ENCODE measurements at regions of chrX and their contacts with region 1.

Region 1: DNA sequence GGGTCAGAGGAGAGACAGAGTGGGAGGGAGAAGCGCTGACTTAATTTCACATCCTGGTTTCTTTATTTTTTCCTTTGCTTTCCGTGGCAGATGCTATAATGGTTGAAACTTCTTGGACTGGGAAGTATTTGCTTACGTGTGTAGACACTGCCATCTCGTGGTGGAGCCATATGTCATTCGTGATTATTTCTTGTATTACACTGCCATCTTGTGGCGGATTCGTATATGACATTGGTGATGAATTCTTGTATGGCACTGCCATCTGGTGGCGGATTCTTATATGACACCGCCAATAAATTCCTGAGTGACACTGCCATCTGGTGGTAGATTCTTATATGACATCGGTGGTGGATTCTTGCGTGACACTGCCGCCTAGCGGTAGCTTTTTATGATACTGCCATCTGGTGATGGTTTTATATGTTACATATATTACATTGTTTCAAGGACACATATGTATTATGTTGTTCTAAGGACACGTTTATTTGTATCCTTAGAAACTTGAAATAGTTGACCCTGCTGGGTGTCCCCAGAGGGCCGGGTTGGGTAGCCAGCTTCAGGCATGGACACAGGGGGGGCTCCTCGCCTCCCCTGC is 37.3 kb upstream of the CLCN4 start:
- DNase-seq: peak; percentile 26 to 87 (median 66)
- ATAC-seq: peak; percentile 72 to 85 (median 79)
- H3K4me3 ChIP-seq: no peak overlapping the region
- H3K4me3 Mint-ChIP-seq: no peak overlapping the region
- H3K27ac ChIP-seq: peak overlapping the region; percentile 49
- H3K27ac Mint-ChIP-seq: peak overlapping the region; percentile 26 to 85
- H3K4me1 ChIP-seq: peaks cover 0 to 17% of the 10 kb centered on the region in 2 experiments
- H3K4me1 Mint-ChIP-seq: peaks cover 13 to 42% (median 20%) of the 10 kb centered on the region in 3 donors
- H3K27me3 ChIP-seq: no peaks in the 10 kb centered on the region
- H3K27me3 Mint-ChIP-seq: no peaks in the 10 kb centered on the region

Region 2: GRCh38 chrX:9882669-9883446 is 236.6 kb before region 1 on chrX:
- CTCF ChIA-PET with region 1: no interaction called
- POLR2A ChIA-PET with region 1: no interaction called
- DNase-seq: no peak
- ATAC-seq: no peak
- H3K4me3 ChIP-seq: no peak overlapping the region
- H3K4me3 Mint-ChIP-seq: no peak overlapping the region
- H3K27ac ChIP-seq: no peak overlapping the region
- H3K27ac Mint-ChIP-seq: no peak overlapping the region
- H3K4me1 ChIP-seq: peaks cover 0 to 3% of the 10 kb centered on the region in 2 experiments
- H3K4me1 Mint-ChIP-seq: peaks cover 2 to 16% (median 2%) of the 10 kb centered on the region in 3 donors
- H3K27me3 ChIP-seq: peaks cover 0 to 5% of the 10 kb centered on the region in 2 experiments
- H3K27me3 Mint-ChIP-seq: peaks cover 2 to 17% of the 10 kb centered on the region in 2 donors

Region 3: GRCh38 chrX:9913146-9913433 is 206.4 kb before region 1 on chrX:
- CTCF ChIA-PET with region 1: no interaction called
- POLR2A ChIA-PET with region 1: no interaction called
- DNase-seq: no peak
- ATAC-seq: no peak
- H3K4me3 ChIP-seq: no peak overlapping the region
- H3K4me3 Mint-ChIP-seq: no peak overlapping the region
- H3K27ac ChIP-seq: no peak overlapping the region
- H3K27ac Mint-ChIP-seq: no peak overlapping the region
- H3K4me1 ChIP-seq: no peaks in the 10 kb centered on the region
- H3K4me1 Mint-ChIP-seq: no peaks in the 10 kb centered on the region
- H3K27me3 ChIP-seq: peaks cover 0 to 3% of the 10 kb centered on the region in 2 experiments
- H3K27me3 Mint-ChIP-seq: peaks cover 5 to 20% of the 10 kb centered on the region in 2 donors

Region 4: DNA sequence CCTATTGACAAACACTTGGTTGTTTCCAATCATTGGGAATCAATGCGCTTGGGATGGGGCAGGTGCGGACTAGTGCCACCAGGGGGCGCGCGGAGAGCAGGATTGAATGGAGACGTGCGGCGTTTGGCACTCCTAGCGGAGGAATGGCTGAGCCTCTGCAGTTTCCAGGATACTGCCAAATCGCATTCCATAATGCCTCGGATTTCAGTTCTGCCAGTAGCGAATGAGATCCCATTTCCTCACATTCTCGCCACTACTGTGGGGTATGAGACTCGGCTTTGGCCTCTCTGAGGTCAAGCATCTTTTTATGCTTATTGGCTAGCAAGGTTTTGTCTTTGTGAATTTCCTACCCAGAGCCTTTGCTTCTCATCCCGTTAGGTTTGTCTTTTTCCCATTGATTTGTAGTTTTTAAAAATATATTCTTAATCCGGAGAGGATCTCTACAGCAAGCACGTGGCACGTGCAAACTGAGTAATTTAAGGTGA is 123.6 kb before region 1 on chrX:
- CTCF ChIA-PET with region 1: interaction called, 6 to 10 read pairs
- POLR2A ChIA-PET with region 1: no interaction called
- DNase-seq: peak; percentile 35 to 84 (median 68)
- ATAC-seq: peak; percentile 74 to 91 (median 79)
- H3K4me3 ChIP-seq: no peak overlapping the region
- H3K4me3 Mint-ChIP-seq: no peak overlapping the region
- H3K27ac ChIP-seq: no peak overlapping the region
- H3K27ac Mint-ChIP-seq: no peak overlapping the region
- H3K4me1 ChIP-seq: peaks cover 0 to 2% of the 10 kb centered on the region in 2 experiments
- H3K4me1 Mint-ChIP-seq: peaks cover 0 to 3% (median 0%) of the 10 kb centered on the region in 3 donors
- H3K27me3 ChIP-seq: no peaks in the 10 kb centered on the region
- H3K27me3 Mint-ChIP-seq: no peaks in the 10 kb centered on the region

Region 5: GRCh38 chrX:10077425-10078188 is 41.9 kb before region 1 on chrX:
- CTCF ChIA-PET with region 1: interaction called, 16 to 17 read pairs
- POLR2A ChIA-PET with region 1: no interaction called
- DNase-seq: peak in 11 of 35 experiments; percentile 1 to 54 (median 12)
- ATAC-seq: peak; percentile 67 to 89 (median 70)
- H3K4me3 ChIP-seq: no peak overlapping the region
- H3K4me3 Mint-ChIP-seq: no peak overlapping the region
- H3K27ac ChIP-seq: no peak overlapping the region
- H3K27ac Mint-ChIP-seq: no peak overlapping the region
- H3K4me1 ChIP-seq: peaks cover 0 to 10% of the 10 kb centered on the region in 2 experiments
- H3K4me1 Mint-ChIP-seq: peaks cover 8 to 17% (median 11%) of the 10 kb centered on the region in 3 donors
- H3K27me3 ChIP-seq: no peaks in the 10 kb centered on the region
- H3K27me3 Mint-ChIP-seq: no peaks in the 10 kb centered on the region

Region 6: GRCh38 chrX:10083809-10084208 is 35.7 kb before region 1 on chrX:
- CTCF ChIA-PET with region 1: interaction called, 3 to 17 read pairs
- POLR2A ChIA-PET with region 1: no interaction called
- DNase-seq: no peak
- ATAC-seq: no peak
- H3K4me3 ChIP-seq: no peak overlapping the region
- H3K4me3 Mint-ChIP-seq: peak overlapping the region in 1 of 3 donors; percentile 19
- H3K27ac ChIP-seq: peak overlapping the region; percentile 90
- H3K27ac Mint-ChIP-seq: peak overlapping the region; percentile 94 to 95
- H3K4me1 ChIP-seq: peaks cover 12 to 41% of the 10 kb centered on the region in 2 experiments
- H3K4me1 Mint-ChIP-seq: peaks cover 38 to 55% (median 43%) of the 10 kb centered on the region in 3 donors
- H3K27me3 ChIP-seq: no peaks in the 10 kb centered on the region
- H3K27me3 Mint-ChIP-seq: no peaks in the 10 kb centered on the region

Region 7: GRCh38 chrX:10265775-10266174 is 146.3 kb after region 1 on chrX:
- CTCF ChIA-PET with region 1: no interaction called
- POLR2A ChIA-PET with region 1: no interaction called
- DNase-seq: no peak
- ATAC-seq: no peak
- H3K4me3 ChIP-seq: no peak overlapping the region
- H3K4me3 Mint-ChIP-seq: no peak overlapping the region
- H3K27ac ChIP-seq: no peak overlapping the region
- H3K27ac Mint-ChIP-seq: no peak overlapping the region
- H3K4me1 ChIP-seq: no peaks in the 10 kb centered on the region
- H3K4me1 Mint-ChIP-seq: no peaks in the 10 kb centered on the region
- H3K27me3 ChIP-seq: no peaks in the 10 kb centered on the region
- H3K27me3 Mint-ChIP-seq: peaks cover 0 to 9% of the 10 kb centered on the region in 2 donors

Measured in T-cell (primary cell).